CD8-positive, alpha-beta T cell (primary cell): ENCODE measurements at regions of chr18 and their contacts with region 1.

Region 1: DNA sequence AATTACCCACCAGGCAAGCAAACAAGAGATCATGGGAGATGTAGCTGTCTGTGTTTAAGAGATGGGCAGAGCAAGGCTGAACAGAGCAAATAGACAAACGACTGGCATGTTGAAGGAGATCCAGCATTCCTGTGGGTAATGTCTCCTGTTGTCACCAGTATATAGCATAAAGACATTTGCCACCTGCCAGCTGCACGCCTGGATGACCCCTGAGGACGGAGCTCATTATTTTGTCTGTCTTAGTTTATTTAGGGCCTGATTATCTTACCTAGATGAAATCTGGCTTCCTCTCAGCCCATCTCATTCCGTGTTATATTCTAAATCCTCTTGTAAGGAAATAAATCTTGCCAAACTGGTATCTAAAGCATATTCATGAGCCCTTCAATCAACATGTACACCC is 510.3 kb upstream of the LINC00305 start:
- DNase-seq: no peak
- ATAC-seq: no peak
- H3K4me3 ChIP-seq: no peak overlapping the region
- H3K4me3 Mint-ChIP-seq: no peak overlapping the region
- H3K27ac ChIP-seq: no peak overlapping the region
- H3K27ac Mint-ChIP-seq: no peak overlapping the region
- H3K4me1 ChIP-seq: no peaks in the 10 kb centered on the region
- H3K4me1 Mint-ChIP-seq: no peaks in the 10 kb centered on the region
- H3K27me3 ChIP-seq: no peaks in the 10 kb centered on the region
- H3K27me3 Mint-ChIP-seq: no peaks in the 10 kb centered on the region
- CTCF ChIP-seq: no peak

Region 2: DNA sequence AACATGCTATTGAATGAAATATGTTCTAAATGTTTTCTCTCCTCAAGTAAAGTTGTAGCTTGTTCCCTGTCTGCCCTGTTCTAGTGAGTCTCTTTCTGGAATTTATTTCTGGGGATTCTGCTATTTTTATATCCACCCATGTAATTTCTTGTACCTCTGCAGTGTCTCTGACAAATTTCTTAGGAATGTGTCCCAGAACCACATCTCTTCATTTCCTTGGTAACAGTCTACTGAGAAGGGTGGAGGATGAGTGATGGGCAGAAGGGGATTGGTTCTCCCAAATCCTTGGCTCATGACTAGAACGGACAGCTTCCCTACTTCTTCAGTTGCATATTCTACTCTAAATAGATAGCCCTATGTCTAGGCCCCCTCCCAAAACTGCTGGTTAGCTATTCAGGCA is 19.7 kb before region 1 on chr18:
- CTCF ChIA-PET with region 1: no interaction called
- POLR2A ChIA-PET with region 1: no interaction called
- intact Hi-C with region 1: loop called in 1 of 2 experiments (anchors 2 kb)
- DNase-seq: no peak
- ATAC-seq: no peak
- H3K4me3 ChIP-seq: no peak overlapping the region
- H3K4me3 Mint-ChIP-seq: no peak overlapping the region
- H3K27ac ChIP-seq: no peak overlapping the region
- H3K27ac Mint-ChIP-seq: no peak overlapping the region
- H3K4me1 ChIP-seq: no peaks in the 10 kb centered on the region
- H3K4me1 Mint-ChIP-seq: no peaks in the 10 kb centered on the region
- H3K27me3 ChIP-seq: no peaks in the 10 kb centered on the region
- H3K27me3 Mint-ChIP-seq: no peaks in the 10 kb centered on the region
- CTCF ChIP-seq: no peak